Right cardiac atrium (tissue), 5 donors: ENCODE measurements at regions of chr7 and their contacts with region 1.

Region 1: DNA sequence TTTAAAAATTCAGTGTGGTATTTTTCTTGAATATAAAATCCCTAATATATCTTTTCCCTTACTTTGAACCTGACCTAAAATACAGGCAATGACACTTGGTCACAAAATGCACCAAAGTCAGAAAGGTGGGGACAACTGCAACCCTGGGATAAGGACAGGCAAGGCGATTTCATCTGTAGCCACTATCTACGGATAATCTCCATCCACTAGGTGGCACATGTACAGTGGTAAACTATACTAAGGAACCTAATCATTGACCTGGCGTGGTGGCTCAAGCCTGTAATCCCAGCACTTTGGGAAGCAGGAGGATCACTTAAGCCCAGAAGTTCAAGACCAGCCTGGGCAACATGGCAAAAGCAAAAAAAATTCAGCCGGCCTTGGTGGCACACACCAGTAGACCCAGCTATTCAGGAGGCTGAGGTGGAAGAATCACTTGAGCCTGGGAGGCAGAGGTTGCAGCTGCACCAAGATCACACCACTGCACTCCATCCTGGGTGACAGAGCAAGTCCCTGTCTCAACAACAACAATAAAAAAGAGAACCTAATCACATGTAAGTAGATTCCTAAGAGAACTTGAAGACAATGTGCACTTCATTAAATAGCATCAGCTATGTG is 98.9 kb downstream of the KMT2C start:
- DNase-seq: no peak
- ATAC-seq: peak; percentile 63 to 66
- H3K4me3 ChIP-seq: no peak overlapping the region
- H3K27ac ChIP-seq: no peak overlapping the region
- H3K4me1 ChIP-seq: peaks cover 1% of the 10 kb centered on the region
- H3K27me3 ChIP-seq: no peaks in the 10 kb centered on the region

Region 2: GRCh38 chr7:152436111-152436930 is 99.5 kb after region 1 on chr7:
- intact Hi-C with region 1: loop called in 1 of 4 experiments (anchors 10 kb)
- DNase-seq: peak; percentile 94 to 98 (median 97)
- ATAC-seq: peak; percentile 88 to 92
- H3K4me3 ChIP-seq: peak overlapping the region; percentile 100
- H3K27ac ChIP-seq: peak overlapping the region; percentile 100
- H3K4me1 ChIP-seq: peaks cover 2% of the 10 kb centered on the region
- H3K27me3 ChIP-seq: no peaks in the 10 kb centered on the region

Region 3: GRCh38 chr7:152709287-152710152 is 372.7 kb after region 1 on chr7:
- intact Hi-C with region 1: loop called in 1 of 4 experiments (anchors 5 kb)
- DNase-seq: no peak
- ATAC-seq: no peak
- H3K4me3 ChIP-seq: no peak overlapping the region
- H3K27ac ChIP-seq: no peak overlapping the region
- H3K4me1 ChIP-seq: no peaks in the 10 kb centered on the region
- H3K27me3 ChIP-seq: no peaks in the 10 kb centered on the region